ENCODE measurements at regions of chr20 and their contacts with region 1.

Region 1: GRCh38 chr20:833450-834150 is at the start of gene FAM110A:
- DNase-seq: peak; percentile 97
- H3K4me3 Mint-ChIP-seq: peak within 1 kb of the TSS; percentile 92
- H3K27ac Mint-ChIP-seq: peak within 1 kb of the TSS; percentile 72
- H3K4me1 Mint-ChIP-seq: peaks cover 37% of the 10 kb centered on the region
- H3K27me3 Mint-ChIP-seq: no peaks in the 10 kb centered on the region
- total RNA-seq, gene FAM110A: 18.0 to 20.1 TPM

Region 2: DNA sequence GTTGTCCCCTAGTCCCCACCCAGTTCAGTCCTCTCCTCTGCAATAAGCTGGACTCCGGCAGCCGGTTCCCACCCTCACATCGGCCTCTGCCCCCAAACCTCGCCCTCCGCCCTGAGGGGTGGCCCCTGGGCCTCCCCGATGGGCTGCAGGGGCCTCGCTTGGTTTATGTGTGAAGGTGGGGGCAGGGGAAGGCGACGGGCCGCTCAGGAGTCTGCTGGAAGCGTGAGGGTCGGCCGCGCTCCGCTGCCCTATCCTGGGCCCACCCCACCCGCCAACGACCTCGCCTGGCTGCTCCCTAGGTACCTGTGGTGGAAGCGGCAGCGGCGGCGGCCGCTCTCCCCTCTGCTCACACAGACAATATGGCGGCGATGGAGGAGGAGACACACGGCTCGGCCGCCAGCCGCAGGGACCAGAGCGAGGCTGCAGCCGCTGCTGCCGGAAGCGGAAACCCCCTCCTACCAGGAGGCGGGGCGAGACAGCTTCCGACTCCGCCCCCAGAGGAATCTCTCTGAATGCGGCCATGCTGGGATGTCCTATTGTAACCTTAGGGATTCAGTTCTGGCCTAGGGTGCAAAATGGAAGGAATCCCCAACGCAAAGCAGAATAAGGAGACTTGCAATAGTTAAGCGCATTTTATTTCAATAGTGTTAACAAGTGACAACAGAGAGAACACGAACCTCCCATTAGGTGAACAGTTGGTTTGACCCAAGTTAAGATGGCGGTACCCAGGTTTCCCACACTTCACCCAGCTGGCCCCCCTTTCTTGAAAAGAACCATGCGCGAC is 290.0 kb before region 1 on chr20 and contains the start of gene CSNK2A1:
- CTCF ChIA-PET with region 1: no interaction called
- POLR2A ChIA-PET with region 1: no interaction called
- intact Hi-C with region 1: loop called (anchors 5 kb)
- DNase-seq: peak; percentile 97
- H3K4me3 Mint-ChIP-seq: peak within 1 kb of the TSS; percentile 85
- H3K27ac Mint-ChIP-seq: peak within 1 kb of the TSS; percentile 96
- H3K4me1 Mint-ChIP-seq: peaks cover 48% of the 10 kb centered on the region
- H3K27me3 Mint-ChIP-seq: peaks cover 4% of the 10 kb centered on the region
- total RNA-seq, gene CSNK2A1: 154 to 155 TPM

Region 3: DNA sequence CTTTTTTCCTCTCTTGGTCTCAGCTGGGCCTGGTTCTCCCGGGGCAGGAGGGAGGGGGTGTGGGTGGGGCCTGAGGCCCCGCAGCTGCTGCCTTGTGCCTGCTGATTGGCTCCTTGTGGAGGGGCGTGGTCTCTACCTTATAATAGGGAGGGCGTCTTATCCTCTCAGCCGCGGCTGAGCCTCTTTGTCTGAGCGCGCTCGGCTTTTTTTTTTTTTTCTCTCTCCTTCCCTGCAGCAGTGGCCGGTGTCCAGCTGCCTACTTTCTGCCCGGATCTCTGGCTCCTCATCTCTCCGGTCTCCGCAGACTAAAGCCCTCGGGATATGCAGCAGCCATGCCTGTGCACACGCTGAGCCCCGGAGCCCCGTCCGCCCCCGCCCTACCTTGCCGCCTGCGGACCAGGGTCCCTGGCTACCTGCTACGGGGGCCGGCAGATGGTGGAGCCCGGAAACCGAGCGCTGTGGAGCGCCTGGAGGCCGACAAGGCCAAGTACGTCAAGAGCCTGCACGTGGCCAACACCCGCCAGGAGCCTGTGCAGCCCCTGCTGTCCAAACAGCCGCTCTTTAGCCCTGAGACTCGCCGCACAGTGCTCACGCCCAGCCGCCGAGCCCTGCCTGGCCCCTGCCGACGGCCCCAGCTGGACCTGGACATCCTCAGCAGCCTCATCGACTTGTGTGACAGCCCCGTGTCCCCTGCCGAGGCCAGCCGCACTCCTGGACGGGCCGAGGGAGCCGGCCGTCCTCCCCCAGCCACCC is 11.0 kb after region 1 on chr20:
- CTCF ChIA-PET with region 1: interaction called, 18 read pairs
- POLR2A ChIA-PET with region 1: interaction called, 7 read pairs
- intact Hi-C with region 1: loop called (anchors 1 kb)
- DNase-seq: peak; percentile 93
- H3K4me3 Mint-ChIP-seq: peak overlapping the region; percentile 77
- H3K27ac Mint-ChIP-seq: no peak overlapping the region
- H3K4me1 Mint-ChIP-seq: peaks cover 51% of the 10 kb centered on the region
- H3K27me3 Mint-ChIP-seq: no peaks in the 10 kb centered on the region

Region 4: DNA sequence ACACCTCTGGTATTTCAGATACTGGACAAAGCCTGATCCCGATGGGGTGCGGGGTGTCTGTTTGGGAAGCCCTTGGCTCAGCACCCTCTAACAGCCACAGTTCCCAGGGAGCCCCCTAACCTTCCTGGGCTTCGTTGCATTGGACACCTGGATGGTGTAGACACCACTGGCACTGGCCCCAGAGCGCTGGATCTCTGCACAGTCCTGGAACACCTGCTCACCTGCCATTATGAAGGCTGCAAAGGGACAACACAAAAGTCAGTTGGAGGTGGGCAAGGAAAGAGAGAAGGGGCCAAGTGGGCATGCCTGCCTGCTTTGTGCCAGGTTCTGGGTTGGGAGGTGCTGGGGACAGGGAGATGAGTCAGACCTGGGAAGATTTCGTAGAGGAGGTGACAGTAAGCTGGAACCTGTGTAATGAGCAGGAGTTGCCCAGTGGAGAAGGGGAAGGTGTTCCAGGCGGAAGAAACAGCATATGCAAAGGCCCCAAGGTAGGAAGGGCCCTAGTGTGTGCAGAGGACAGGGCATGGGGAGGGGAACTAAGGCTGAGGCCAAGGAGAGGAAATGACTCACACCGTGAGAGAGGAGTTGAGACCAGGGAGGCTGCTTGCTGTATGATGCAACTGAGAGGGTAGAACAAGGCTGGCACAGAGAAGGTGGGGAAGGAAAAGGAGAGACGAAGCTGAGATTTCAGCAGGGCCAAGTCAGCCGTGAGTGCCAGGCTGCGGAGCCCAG is 47.6 kb after region 1 on chr20:
- CTCF ChIA-PET with region 1: no interaction called
- POLR2A ChIA-PET with region 1: no interaction called
- intact Hi-C with region 1: loop called (anchors 2 kb)
- DNase-seq: peak; percentile 54
- H3K4me3 Mint-ChIP-seq: peak overlapping the region; percentile 50
- H3K27ac Mint-ChIP-seq: peak overlapping the region; percentile 6
- H3K4me1 Mint-ChIP-seq: peaks cover 9% of the 10 kb centered on the region
- H3K27me3 Mint-ChIP-seq: peaks cover 6% of the 10 kb centered on the region

Region 5: DNA sequence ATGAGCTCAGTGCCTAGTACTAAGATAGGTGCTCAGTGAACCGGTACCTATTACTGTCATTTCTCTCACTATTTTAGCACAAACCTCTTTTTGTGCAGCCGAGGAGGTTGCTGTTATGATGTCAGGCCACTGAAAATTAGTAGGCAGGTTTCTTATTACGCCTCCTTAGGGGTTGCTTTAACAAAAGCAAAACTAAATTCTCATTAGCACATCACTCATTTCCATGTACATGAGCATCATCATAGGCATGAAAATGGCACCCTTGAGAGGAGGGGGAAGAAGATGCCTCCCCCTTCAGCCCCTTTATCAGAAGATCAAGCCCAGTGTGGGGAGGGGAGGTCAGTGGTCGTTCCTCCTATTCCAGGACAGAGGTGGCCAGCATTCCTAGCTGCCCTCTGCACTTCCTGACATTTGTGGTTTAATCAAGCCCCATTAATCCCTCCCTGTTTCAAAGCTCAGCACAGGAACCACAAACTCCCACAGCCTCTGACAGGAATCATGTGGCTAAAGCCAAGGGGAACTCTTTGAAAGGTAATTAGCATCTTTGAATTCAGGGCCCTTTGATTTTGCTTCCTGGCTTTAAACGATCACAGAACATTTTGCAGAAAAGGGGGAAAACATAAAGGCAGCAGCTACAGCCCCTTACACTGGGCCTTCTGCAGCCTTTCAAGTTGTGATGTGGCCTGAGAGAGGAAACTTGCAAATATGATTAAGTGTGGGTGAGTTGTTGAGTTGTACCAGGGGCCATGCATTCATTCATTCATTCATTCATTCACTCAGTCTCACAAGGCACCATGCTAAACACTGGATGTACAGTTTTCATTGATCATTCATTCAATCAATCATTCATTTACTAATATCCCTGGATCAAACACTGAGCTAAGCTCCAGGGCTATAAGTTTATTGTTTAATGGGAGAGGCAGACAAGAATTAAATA is 252.9 kb after region 1 on chr20:
- CTCF ChIA-PET with region 1: no interaction called
- POLR2A ChIA-PET with region 1: no interaction called
- intact Hi-C with region 1: loop called (anchors 1 kb)
- DNase-seq: peak; percentile 31
- H3K4me3 Mint-ChIP-seq: no peak overlapping the region
- H3K27ac Mint-ChIP-seq: peak overlapping the region; percentile 76
- H3K4me1 Mint-ChIP-seq: peaks cover 24% of the 10 kb centered on the region
- H3K27me3 Mint-ChIP-seq: no peaks in the 10 kb centered on the region